Heart left ventricle (tissue), 16 donors: ENCODE measurements at regions of chr3 and their contacts with region 1.

Region 1: GRCh38 chr3:43162230-43163084 is 56.6 kb upstream of the POMGNT2 start:
- DNase-seq: no peak
- ATAC-seq: peak in 3 of 4 donors; percentile 51 to 81 (median 65)
- H3K4me3 ChIP-seq: peak overlapping the region in 7 of 12 donors; percentile 3 to 19 (median 11)
- H3K27ac ChIP-seq: peak overlapping the region in 7 of 12 donors; percentile 38 to 73 (median 59)
- H3K4me1 ChIP-seq: peaks cover 0 to 16% (median 10%) of the 10 kb centered on the region in 12 donors
- H3K27me3 ChIP-seq: no peaks in the 10 kb centered on the region
- CTCF ChIP-seq: peak; percentile 30 to 68 (median 57)
- POLR2A ChIP-seq: no peak

Region 2: DNA sequence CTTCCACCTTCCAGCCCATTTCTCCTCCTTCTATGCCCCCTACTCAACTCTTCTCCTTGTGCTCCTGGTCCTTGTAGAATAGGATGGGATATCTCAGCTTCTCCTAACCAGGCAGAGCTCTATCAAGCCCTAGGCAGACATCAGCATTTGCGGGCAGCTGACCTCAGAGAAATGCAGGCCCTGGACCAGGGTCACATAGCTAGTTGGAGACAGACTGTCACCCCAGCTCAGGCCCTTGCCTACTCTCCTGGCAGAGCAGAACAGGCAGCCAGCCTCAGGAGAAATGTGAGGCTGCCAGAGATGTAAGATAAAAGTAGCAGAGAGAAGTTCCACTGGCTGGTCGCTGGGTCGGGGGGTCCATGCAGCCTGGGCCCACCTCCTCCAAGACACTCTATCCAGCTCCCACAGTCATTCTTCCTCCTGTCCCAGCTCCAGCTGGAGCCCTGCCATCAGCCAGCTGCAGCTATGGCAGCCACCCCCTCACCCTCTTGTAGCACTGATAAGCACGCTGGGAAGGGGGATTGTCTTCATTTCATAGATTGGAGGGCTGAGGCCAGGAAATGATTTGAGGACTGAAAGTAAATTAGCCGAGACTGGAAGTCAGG is 290.8 kb before region 1 on chr3:
- intact Hi-C with region 1: no loop called
- DNase-seq: peak in 4 of 5 donors; percentile 32 to 52 (median 35)
- ATAC-seq: peak; percentile 36 to 65 (median 61)
- H3K4me3 ChIP-seq: no peak overlapping the region
- H3K27ac ChIP-seq: peak overlapping the region in 3 of 12 donors; percentile 19 to 53 (median 48)
- H3K4me1 ChIP-seq: peaks cover 0 to 21% (median 7%) of the 10 kb centered on the region in 12 donors
- H3K27me3 ChIP-seq: no peaks in the 10 kb centered on the region
- CTCF ChIP-seq: no peak
- POLR2A ChIP-seq: no peak

Region 3: DNA sequence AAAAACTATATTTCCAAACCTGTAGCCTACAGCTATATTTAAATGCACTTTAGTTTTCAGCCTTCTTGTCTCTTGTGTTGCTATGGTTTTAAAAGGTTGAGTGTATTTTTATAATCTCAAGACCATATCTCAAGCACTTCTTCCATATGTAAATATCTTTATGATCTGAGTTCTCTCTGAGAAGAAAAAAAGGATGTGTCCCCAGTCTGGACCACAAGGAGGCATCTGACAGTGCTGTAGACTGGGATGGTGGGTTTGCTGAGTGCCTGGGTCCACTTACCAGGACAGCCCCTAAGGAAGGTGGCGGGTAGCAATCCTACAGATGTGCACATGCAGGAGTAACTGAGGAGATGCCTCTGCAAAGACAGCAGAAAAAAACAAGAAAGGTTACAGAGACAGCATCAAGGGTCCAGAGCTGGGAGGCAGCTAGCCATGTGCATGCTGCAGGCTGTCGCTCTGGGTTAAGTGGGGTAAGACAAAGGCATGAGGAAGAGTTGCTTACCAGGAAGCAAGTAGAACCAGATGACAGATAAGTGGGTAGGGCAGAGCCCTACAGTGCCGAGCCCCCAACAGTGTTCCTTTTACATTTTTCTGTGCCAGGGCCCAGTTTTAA is 53.3 kb after region 1 on chr3:
- intact Hi-C with region 1: loop called in 1 of 10 experiments (anchors 10 kb)
- DNase-seq: no peak
- ATAC-seq: no peak
- H3K4me3 ChIP-seq: no peak overlapping the region
- H3K27ac ChIP-seq: peak overlapping the region in 1 of 12 donors; percentile 35
- H3K4me1 ChIP-seq: peaks cover 0 to 22% (median 6%) of the 10 kb centered on the region in 12 donors
- H3K27me3 ChIP-seq: no peaks in the 10 kb centered on the region
- CTCF ChIP-seq: no peak
- POLR2A ChIP-seq: no peak

Region 4: DNA sequence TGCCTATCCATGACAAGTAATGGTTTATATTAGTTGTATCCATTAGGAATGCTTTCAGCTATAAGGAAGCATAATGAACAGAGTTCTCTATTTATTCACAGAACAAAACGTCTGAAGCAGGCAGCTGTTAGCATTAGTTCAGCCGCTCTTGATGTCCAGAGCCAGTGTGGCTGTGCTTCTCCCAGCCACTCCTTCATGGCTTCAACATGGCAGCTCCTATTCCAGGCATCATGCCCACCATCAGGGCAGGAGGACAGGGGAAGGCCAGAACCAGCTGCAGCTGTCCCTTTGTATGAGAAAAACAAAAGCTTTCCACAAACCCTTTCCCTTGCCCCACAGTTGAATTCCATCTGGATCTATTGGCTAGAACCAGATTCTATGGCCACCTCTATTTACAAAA is 111.0 kb after region 1 on chr3:
- intact Hi-C with region 1: loop called in 1 of 10 experiments (anchors 10 kb)
- DNase-seq: no peak
- ATAC-seq: no peak
- H3K4me3 ChIP-seq: no peak overlapping the region
- H3K27ac ChIP-seq: no peak overlapping the region
- H3K4me1 ChIP-seq: no peaks in the 10 kb centered on the region
- H3K27me3 ChIP-seq: no peaks in the 10 kb centered on the region
- CTCF ChIP-seq: no peak
- POLR2A ChIP-seq: no peak

Region 5: DNA sequence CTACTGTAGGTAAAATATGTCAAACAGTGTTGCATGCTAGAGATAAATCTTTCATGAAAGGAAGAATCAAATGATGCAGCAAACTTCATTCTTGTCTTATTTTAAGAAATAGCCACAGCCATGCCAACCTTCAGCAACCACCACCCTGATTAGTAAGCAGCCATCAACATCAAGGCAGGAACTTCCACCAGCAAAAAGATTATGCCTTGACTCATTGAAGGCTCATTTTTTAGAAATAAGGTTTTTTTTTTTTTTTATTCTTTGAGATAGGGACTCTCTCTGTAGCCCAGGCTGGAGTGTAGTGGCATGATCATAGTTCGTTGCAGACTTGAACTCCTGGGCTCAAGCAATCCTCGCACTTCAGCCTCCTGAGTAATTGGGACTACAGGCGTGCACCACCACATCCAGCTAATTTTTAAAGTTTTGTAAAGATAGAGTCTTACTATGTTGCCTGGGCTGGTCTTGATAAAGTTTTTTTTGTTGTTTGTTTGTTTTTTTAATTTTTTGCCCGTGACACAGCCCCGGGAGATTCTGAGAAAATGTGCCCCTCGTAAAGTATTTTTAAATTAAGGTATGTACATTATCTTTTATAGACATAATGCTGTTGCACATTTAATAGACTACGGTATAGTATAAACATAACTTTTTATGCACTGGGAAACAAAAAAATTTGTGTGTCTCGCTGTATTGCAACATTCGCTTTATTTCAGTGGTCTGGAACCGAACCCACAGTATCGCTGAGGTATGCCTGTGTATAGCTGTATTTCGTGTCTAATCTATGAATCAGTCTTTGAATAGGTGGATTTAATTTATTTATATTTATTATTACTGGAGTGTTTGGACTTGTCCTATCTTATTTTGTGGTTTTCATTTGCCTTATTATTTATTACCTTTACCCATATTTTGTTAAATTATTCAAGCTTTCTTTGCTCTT is 147.2 kb after region 1 on chr3:
- intact Hi-C with region 1: no loop called
- DNase-seq: no peak
- ATAC-seq: no peak
- H3K4me3 ChIP-seq: no peak overlapping the region
- H3K27ac ChIP-seq: no peak overlapping the region
- H3K4me1 ChIP-seq: peaks cover 0 to 56% (median 24%) of the 10 kb centered on the region in 12 donors
- H3K27me3 ChIP-seq: no peaks in the 10 kb centered on the region
- CTCF ChIP-seq: no peak
- POLR2A ChIP-seq: no peak

Region 6: GRCh38 chr3:43378066-43378935 is 215.8 kb after region 1 on chr3:
- intact Hi-C with region 1: loop called in 6 of 10 experiments (anchors 2 to 10 kb)
- DNase-seq: no peak
- ATAC-seq: peak in 1 of 4 donors; percentile 42
- H3K4me3 ChIP-seq: no peak overlapping the region
- H3K27ac ChIP-seq: peak overlapping the region in 4 of 12 donors; percentile 1 to 53 (median 46)
- H3K4me1 ChIP-seq: peaks cover 0 to 22% (median 10%) of the 10 kb centered on the region in 12 donors
- H3K27me3 ChIP-seq: no peaks in the 10 kb centered on the region
- CTCF ChIP-seq: peak; percentile 37 to 67 (median 54)
- POLR2A ChIP-seq: no peak